ENCODE measurements at regions of chr16 and their contacts with region 1.

Region 1: GRCh38 chr16:15427648-15428239 is 6.6 kb upstream of the BMERB1 start:
- DNase-seq: peak in 1 of 2 donors; percentile 86
- H3K4me3 ChIP-seq: peak overlapping the region in 1 of 2 donors; percentile 40
- H3K27ac ChIP-seq: no peak overlapping the region
- H3K4me1 ChIP-seq: no peaks in the 10 kb centered on the region
- H3K27me3 ChIP-seq: no peaks in the 10 kb centered on the region
- CTCF ChIP-seq: peak; percentile 65 to 79 (median 70)

Region 2: GRCh38 chr16:15548482-15548891 is 120.7 kb after region 1 on chr16:
- intact Hi-C with region 1: loop called (anchors 1 kb)
- DNase-seq: no peak
- H3K4me3 ChIP-seq: no peak overlapping the region
- H3K27ac ChIP-seq: no peak overlapping the region
- H3K4me1 ChIP-seq: peaks cover 0 to 6% of the 10 kb centered on the region in 2 donors
- H3K27me3 ChIP-seq: no peaks in the 10 kb centered on the region
- CTCF ChIP-seq: no peak

Region 3: GRCh38 chr16:15621889-15622288 is 194.1 kb after region 1 on chr16:
- intact Hi-C with region 1: no loop called
- DNase-seq: no peak
- H3K4me3 ChIP-seq: no peak overlapping the region
- H3K27ac ChIP-seq: no peak overlapping the region
- H3K4me1 ChIP-seq: peaks cover 0 to 13% of the 10 kb centered on the region in 2 donors
- H3K27me3 ChIP-seq: no peaks in the 10 kb centered on the region
- CTCF ChIP-seq: no peak

Region 4: GRCh38 chr16:16191493-16192167 is 763.9 kb after region 1 on chr16:
- intact Hi-C with region 1: loop called (anchors 5 kb)
- DNase-seq: no peak
- H3K4me3 ChIP-seq: no peak overlapping the region
- H3K27ac ChIP-seq: no peak overlapping the region
- H3K4me1 ChIP-seq: no peaks in the 10 kb centered on the region
- H3K27me3 ChIP-seq: no peaks in the 10 kb centered on the region
- CTCF ChIP-seq: no peak